ENCODE measurements at regions of chrX and their contacts with region 1.

Region 1: DNA sequence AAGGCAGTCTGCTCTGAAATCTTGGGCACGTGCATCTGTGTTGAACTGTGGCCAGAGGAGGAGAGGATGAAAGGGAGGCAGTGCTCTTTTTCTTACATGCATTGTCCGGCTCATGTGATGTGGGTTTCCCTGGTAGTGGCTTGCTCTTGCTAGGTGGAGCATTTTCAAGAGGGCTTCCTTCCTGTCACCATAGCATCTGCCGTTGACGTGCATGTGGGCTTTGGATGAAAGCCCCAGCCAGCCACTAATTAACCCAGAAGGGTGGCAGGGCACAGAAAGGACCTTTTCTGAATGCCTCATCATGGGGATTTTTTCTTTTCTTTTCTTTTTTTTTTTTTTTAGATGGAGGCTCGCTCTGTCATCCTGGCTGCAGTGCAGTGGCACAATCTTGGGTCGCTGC is 121.3 kb downstream of the GPR143 start:
- DNase-seq: peak; percentile 70
- H3K4me3 Mint-ChIP-seq: no peak overlapping the region
- H3K27ac Mint-ChIP-seq: no peak overlapping the region
- H3K4me1 Mint-ChIP-seq: peaks cover 31% of the 10 kb centered on the region
- H3K27me3 Mint-ChIP-seq: no peaks in the 10 kb centered on the region

Region 2: GRCh38 chrX:8988446-8988845 is 655.9 kb before region 1 on chrX:
- CTCF ChIA-PET with region 1: no interaction called
- intact Hi-C with region 1: loop called (anchors 10 kb)
- DNase-seq: peak; percentile 40
- H3K4me3 Mint-ChIP-seq: no peak overlapping the region
- H3K27ac Mint-ChIP-seq: no peak overlapping the region
- H3K4me1 Mint-ChIP-seq: peaks cover 24% of the 10 kb centered on the region
- H3K27me3 Mint-ChIP-seq: no peaks in the 10 kb centered on the region

Region 3: GRCh38 chrX:9293051-9293496 is 351.3 kb before region 1 on chrX:
- CTCF ChIA-PET with region 1: no interaction called
- intact Hi-C with region 1: no loop called
- DNase-seq: no peak
- H3K4me3 Mint-ChIP-seq: no peak overlapping the region
- H3K27ac Mint-ChIP-seq: no peak overlapping the region
- H3K4me1 Mint-ChIP-seq: peaks cover 3% of the 10 kb centered on the region
- H3K27me3 Mint-ChIP-seq: no peaks in the 10 kb centered on the region